AG04449 (cell line): ENCODE measurements at regions of chr1 and their contacts with region 1.

Region 1: GRCh38 chr1:62530516-62531154 is 66.7 kb upstream of the ANGPTL3 start:
- DNase-seq: peak; percentile 5
- H3K4me3 ChIP-seq: no peak overlapping the region
- CTCF ChIP-seq: peak; percentile 86

Region 2: DNA sequence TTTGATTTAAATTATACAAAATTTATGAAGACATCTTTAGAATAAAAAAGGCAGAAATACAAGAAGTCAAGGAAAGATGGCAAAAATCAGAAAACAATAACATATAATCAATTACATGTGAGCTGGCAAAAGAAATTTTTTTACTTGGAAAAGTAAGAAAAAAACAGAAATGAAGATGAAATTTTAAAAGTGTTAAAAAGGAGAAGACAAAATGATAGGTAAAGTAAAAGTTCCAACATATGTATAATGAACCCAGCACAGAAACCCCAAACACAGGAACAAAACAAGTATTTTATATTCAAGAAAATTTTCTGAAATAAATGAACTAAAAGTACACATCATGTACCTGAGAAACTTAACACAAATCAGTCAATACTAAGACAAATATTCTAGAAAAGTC is 30.4 kb before region 1 on chr1:
- CTCF ChIA-PET with region 1: interaction called, 17 read pairs
- POLR2A ChIA-PET with region 1: no interaction called
- DNase-seq: no peak
- H3K4me3 ChIP-seq: no peak overlapping the region
- CTCF ChIP-seq: no peak

Region 3: DNA sequence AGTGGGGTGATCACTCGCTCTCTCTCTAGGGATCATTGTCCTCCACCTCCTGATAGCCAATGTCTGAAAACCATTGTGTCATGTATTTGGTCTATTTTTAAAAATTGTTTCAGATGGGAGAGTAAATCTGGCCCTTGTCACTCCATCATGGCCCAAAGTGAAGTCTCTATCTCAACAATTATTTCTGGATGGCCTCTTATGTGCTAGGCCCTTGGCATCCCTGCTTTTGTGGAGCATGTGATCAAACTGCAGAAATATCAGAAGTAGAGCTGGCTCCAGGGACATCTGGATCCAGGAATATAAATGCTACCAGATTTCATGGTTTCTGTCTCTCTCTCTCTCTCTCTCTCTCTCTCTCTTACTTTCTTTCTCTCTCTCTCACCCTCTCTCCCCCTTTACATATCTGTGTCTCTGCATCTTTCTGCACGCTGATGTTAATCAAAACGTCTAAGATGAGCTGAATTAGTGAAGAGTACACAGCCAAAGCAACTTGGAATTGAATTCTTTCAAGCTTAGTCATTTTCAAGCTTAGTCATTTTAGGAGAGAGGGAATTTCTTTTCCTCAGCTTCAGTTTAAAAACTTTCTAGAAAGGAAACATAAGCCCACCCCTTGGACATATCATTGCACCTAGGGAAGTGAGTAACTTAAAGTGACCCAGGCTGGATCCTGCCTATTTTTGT is 205.0 kb after region 1 on chr1:
- CTCF ChIA-PET with region 1: interaction called, 13 read pairs
- POLR2A ChIA-PET with region 1: no interaction called
- DNase-seq: no peak
- H3K4me3 ChIP-seq: no peak overlapping the region
- CTCF ChIP-seq: no peak